ENCODE measurements at regions of chr4 and their contacts with region 1.

Region 1: DNA sequence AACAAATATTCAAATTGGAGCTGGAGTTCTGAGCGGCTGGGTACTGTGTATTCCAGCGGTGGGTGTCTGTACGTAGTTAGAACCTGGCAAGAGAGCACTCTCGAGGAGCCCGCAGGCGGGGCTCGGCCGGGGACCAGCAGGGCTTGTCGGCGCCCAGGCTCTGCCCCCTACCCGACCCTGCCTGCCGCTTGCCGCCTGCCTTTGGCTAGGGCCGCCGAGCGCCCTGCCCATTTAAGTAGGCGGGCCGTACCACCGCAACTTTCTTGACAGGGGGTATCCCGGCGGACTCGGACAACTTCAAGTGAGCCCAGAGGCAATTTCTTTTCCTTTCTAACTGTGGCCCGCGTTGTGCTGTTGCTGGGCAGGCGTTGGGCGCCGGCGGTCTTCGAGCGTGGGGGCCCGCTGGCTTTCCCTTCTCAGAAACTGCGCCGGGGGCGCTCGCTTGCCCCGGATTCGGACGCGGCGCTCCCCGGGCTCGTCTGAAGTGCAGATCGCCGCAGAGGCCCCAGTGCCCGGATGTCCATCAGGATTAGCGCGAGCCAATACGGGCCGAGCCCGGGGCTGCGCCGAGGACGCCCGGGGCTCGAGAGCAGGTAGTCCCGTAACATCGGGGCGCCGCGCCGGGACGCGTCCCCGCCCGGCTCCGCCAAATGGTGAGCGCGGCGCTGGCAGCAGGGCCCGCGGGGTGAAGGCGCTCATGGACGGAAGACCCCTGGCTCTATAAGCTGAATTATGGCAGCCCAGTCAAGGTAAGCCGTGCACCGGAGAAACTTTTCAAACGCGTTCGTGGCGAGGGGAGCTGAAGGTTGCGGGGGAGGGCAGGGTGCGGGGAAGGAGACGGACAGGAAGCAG is 72.1 kb downstream of the AFF1 start:
- DNase-seq: peak; percentile 97
- H3K4me3 Mint-ChIP-seq: peak overlapping the region; percentile 95
- H3K27ac Mint-ChIP-seq: peak overlapping the region; percentile 99
- H3K4me1 Mint-ChIP-seq: peaks cover 50% of the 10 kb centered on the region
- H3K27me3 Mint-ChIP-seq: no peaks in the 10 kb centered on the region

Region 2: DNA sequence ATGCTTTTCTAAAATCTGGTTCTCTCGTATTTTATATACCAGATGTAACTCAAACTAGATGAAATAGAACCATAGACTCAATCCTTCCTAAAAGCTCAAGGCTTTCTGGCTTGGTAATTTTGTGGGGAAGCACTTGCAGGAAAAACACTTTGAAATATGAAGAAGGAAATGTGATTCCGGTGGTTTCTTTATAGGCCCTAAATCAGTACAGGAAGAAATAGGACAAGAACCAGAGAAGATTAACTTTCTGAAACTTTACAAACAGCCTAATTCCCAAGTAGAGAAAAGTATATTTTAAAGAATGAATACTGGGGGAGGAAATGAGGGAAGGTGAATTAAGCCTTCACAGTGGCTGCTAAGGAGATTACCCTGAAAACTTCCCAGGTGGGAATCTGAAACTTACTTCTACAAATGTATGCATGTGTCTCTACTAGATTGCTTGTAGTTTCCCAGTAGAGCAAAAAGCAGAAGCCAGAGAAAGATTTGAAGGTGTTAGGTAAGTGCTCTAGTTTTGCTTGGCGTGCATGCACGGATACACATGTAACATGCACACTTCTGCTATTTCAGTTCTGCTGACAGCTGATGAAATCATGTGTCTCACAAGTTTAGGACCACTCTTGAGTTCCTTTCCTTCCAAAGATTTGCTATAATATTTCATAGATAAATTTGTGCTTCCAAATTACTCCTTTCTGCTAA is 20.0 kb after region 1 on chr4:
- intact Hi-C with region 1: loop called (anchors 2 kb)
- DNase-seq: no peak
- H3K4me3 Mint-ChIP-seq: no peak overlapping the region
- H3K27ac Mint-ChIP-seq: no peak overlapping the region
- H3K4me1 Mint-ChIP-seq: peaks cover 22% of the 10 kb centered on the region
- H3K27me3 Mint-ChIP-seq: no peaks in the 10 kb centered on the region

Region 3: DNA sequence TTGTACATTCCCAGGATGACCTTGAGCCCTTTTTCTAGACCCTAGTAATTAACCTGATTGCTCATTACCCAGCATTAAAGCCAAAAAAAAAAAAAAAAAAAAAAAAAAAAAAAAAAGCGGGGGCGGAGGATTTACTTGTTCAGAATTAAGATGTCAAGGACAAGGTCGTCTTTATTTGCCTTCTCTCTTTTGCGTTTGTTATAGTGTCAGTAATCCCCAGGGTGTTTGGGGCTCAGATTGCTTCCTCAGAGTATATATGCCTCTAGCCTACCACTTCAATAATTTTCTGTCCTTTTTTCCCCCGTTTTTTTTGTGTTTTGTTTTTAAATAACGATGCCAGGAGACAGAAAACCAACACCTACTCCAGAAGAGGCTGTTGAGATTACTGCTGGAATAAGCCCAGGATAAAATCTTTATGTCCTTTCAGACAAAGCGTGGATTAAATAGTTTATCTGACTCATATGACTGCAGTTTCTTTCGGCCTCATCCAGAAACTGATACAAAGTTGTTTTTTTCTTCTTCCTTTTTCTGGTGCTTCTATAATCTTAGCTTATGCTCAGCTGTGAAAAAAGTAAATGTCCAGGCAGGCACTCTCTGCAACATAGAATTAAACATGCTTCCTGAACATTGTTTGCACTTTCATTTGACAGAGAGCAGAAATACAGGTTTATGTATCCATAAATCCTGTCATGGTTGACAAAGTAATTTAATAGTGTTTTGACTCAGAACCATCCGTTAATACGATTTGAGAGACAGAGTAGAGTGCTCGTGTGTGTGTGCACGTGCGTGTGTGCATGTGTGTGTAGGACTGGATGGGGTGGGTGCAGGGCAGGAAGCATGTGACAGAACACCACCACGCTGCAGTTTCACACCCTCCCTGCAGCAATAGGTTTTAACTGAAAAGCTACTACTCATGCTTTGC is 66.6 kb after region 1 on chr4:
- intact Hi-C with region 1: loop called (anchors 1 kb)
- DNase-seq: peak; percentile 82
- H3K4me3 Mint-ChIP-seq: peak overlapping the region; percentile 83
- H3K27ac Mint-ChIP-seq: peak overlapping the region; percentile 85
- H3K4me1 Mint-ChIP-seq: peaks cover 34% of the 10 kb centered on the region
- H3K27me3 Mint-ChIP-seq: no peaks in the 10 kb centered on the region

Region 4: DNA sequence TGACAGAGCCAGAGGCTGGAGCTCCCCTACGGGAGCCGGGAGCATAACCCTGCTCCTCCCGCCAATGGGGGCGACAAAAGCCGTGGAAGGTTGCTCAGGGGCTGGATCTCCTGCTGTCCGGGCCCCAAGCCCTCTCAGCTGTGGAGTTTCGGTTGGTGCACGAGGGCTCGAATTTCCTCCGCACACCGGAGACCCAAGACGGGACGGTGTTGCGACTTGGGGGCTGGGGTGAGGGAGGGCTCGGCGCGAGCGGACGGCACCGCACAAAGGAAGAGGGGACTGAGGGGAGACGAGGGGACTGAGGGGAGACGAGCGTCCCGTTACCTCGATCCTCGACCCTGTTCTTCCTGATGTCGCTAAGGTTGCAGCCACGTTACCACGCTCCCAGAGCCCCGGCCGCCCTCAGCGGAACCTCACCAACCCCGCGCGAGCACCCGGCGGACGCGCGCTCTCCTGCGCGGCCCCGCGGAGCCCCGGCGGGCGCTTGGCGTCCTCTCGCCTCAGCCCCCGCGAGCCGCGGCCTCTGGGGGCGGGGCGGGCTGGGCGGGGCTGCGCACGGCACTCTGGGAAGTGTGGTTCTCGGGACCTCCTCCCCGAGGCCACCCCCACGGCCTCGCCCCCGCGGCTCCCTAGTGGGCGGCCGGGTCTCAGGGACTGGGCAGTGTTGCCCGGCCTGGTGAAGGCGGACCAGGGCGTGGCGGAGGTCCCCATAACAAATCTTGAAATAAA is 213.4 kb after region 1 on chr4 and contains the start of gene KLHL8:
- intact Hi-C with region 1: loop called (anchors 1 kb)
- DNase-seq: peak; percentile 97
- H3K4me3 Mint-ChIP-seq: peak within 1 kb of the TSS; percentile 89
- H3K27ac Mint-ChIP-seq: peak within 1 kb of the TSS; percentile 95
- H3K4me1 Mint-ChIP-seq: peaks cover 10% of the 10 kb centered on the region
- H3K27me3 Mint-ChIP-seq: peaks cover 9% of the 10 kb centered on the region
- total RNA-seq, gene KLHL8: 16.5 and 17.1 TPM in 2 replicates